ENCODE measurements at regions of chr17 and their contacts with region 1.

Region 1: DNA sequence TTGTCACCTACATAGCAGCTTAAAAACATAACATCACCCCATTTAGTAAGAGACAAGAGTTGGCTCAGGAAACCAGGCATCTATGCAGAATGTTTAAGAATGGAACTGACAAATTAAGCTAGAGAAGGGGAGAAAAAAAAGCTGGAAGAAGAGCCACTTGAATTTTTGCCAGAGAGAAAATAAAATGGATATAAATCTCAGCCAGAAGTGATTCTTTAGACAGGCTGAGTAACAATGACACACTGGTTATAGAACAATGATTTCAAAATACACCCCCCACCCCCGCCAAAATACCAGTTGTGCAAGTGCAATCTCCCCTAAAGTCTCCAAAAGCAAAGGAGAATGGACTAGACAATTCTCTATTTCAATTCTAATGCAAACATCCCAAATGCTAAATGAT is 22.4 kb downstream of the LSM12 start:
- DNase-seq: no peak
- ATAC-seq: no peak
- H3K4me3 ChIP-seq: no peak overlapping the region
- H3K4me3 Mint-ChIP-seq: no peak overlapping the region
- H3K27ac ChIP-seq: no peak overlapping the region
- H3K27ac Mint-ChIP-seq: no peak overlapping the region
- H3K4me1 ChIP-seq: no peaks in the 10 kb centered on the region
- H3K4me1 Mint-ChIP-seq: peaks cover 8 to 27% of the 10 kb centered on the region in 2 donors
- H3K27me3 ChIP-seq: no peaks in the 10 kb centered on the region
- H3K27me3 Mint-ChIP-seq: no peaks in the 10 kb centered on the region
- CTCF ChIP-seq: no peak

Region 2: GRCh38 chr17:43909537-43910231 is 134.4 kb before region 1 on chr17:
- intact Hi-C with region 1: loop called (anchors 1 kb)
- DNase-seq: no peak
- ATAC-seq: no peak
- H3K4me3 ChIP-seq: no peak overlapping the region
- H3K4me3 Mint-ChIP-seq: no peak overlapping the region
- H3K27ac ChIP-seq: no peak overlapping the region
- H3K27ac Mint-ChIP-seq: no peak overlapping the region
- H3K4me1 ChIP-seq: peaks cover 27% of the 10 kb centered on the region
- H3K4me1 Mint-ChIP-seq: peaks cover 0 to 10% of the 10 kb centered on the region in 2 donors
- H3K27me3 ChIP-seq: peaks cover 33% of the 10 kb centered on the region
- H3K27me3 Mint-ChIP-seq: peaks cover 1 to 23% of the 10 kb centered on the region in 2 donors
- CTCF ChIP-seq: no peak

Region 3: DNA sequence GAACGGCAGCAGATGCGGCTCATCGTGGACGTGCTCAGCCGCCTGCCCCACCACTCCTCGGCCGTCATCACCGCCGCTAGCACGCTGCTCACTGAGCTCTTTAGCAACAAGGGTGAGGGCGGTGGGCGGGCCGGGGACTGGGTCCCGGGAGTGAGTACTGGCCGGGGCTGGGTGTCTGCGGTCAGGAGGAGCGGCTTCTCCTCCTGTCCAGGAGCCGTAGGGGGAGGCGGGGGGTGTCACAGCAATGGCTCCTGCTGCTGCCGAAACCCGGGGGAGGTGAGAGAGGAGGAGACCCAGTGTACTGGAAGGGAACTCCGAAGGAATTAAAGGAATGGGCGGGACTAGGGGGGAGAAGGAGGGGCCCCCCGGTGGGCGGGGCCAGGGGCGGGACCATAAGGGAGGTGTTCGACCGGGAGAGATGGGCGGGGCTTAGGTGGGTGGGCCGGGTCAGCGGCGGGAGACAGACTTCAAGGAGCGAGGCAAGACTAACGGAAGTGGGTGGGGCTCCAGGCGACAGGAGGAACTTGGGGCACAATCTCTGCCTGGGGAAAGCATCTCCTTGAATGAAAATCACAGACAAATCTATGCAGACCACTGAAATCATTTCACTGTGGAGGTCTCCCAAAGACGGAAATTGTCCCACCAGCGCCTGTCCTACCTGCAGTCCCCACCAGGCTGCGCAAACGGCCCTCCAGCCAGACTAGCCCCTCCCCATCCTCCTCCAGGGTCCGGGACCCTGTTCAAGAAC is 37.3 kb before region 1 on chr17:
- intact Hi-C with region 1: loop called (anchors 5 kb)
- DNase-seq: peak; percentile 85 to 97
- ATAC-seq: peak; percentile 86 to 95 (median 88)
- H3K4me3 ChIP-seq: peak overlapping the region; percentile 51
- H3K4me3 Mint-ChIP-seq: peak overlapping the region; percentile 90
- H3K27ac ChIP-seq: peak overlapping the region; percentile 20
- H3K27ac Mint-ChIP-seq: peak overlapping the region; percentile 57 to 76
- H3K4me1 ChIP-seq: peaks cover 41% of the 10 kb centered on the region
- H3K4me1 Mint-ChIP-seq: peaks cover 21 to 24% of the 10 kb centered on the region in 2 donors
- H3K27me3 ChIP-seq: peaks cover 16% of the 10 kb centered on the region
- H3K27me3 Mint-ChIP-seq: peaks cover 3 to 15% of the 10 kb centered on the region in 2 donors
- CTCF ChIP-seq: peak; percentile 52

Region 4: DNA sequence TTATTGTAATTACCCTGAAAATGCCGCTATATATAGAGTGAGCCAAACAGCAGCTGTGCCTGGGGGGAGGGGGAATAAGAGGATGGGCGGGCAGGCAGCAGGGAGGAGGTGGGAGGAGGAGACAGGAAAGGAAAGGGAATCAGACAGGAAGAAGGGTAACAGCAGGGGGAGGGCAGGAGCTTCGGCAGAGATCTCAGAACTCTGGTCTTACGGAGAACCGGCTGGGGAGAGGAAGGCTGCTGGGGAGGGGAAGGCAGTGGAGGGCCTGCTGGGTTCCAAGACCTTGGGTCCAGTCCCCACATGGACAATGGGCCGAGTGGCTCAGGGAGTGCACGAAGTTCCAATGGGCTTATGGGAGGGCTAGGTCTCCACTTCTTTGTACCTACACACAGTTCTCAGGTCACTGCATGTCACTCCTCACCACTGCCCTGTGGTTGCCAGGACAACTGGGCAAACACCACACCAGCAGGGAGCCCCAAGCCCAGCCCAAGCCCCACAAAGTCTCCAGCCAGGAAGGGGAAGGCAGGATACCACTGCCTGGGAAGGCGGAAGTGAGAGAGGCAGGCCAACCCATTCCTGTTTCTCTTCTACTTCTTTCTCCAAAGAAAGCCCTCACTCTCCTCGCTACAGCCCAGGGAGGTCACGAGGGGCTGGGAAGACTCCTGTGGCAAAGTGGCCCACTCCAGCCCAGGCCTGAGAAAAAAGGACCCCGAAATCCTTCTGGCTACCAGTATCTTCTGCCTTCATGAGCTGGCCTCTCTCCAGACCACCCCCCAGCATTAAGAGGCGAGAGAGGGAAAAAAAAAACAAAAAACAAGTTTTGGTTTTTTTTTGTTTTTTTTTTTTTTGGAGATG is 51.8 kb after region 1 on chr17:
- intact Hi-C with region 1: no loop called
- DNase-seq: no peak
- ATAC-seq: peak in 1 of 3 donors; percentile 23
- H3K4me3 ChIP-seq: no peak overlapping the region
- H3K4me3 Mint-ChIP-seq: no peak overlapping the region
- H3K27ac ChIP-seq: no peak overlapping the region
- H3K27ac Mint-ChIP-seq: no peak overlapping the region
- H3K4me1 ChIP-seq: peaks cover 30% of the 10 kb centered on the region
- H3K4me1 Mint-ChIP-seq: peaks cover 5 to 24% of the 10 kb centered on the region in 2 donors
- H3K27me3 ChIP-seq: no peaks in the 10 kb centered on the region
- H3K27me3 Mint-ChIP-seq: no peaks in the 10 kb centered on the region
- CTCF ChIP-seq: no peak

Measured in natural killer cell (primary cell).